ENCODE measurements at regions of chr13 and their contacts with region 1.

Region 1: DNA sequence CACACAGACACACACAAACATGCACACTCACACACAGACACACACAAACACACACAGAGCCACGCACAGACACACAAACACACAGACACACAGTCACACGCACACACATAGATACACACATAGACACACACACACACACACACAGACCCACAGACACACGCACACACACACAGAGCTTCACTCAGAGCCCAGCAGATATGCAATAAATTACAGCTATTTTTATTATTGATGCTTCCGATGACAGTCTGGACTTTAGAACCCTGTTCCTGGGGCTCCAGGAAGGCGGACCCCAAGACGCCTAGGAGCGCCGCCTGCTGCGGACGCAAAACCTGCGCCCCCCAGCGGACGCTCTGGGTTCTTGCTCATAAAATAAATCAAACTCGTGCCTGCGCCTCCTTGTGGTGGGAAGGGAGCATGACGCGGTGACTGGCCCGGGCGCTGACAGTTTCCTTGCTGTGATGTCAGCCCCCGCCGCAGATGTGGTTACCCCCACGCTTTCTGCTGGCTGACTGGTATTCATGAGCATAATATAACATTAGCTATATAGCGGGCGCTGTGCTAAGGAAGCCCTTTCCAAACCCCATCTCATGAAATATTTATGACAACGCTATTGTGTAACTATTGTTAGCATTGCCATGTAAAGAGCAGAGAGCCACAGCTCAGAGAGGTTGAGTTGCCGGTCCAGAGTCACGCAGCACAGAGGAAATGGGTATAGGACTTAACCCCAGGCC is 64.4 kb upstream of the TM9SF2 start:
- DNase-seq: peak; percentile 79
- CTCF ChIP-seq: peak; percentile 99

Region 2: DNA sequence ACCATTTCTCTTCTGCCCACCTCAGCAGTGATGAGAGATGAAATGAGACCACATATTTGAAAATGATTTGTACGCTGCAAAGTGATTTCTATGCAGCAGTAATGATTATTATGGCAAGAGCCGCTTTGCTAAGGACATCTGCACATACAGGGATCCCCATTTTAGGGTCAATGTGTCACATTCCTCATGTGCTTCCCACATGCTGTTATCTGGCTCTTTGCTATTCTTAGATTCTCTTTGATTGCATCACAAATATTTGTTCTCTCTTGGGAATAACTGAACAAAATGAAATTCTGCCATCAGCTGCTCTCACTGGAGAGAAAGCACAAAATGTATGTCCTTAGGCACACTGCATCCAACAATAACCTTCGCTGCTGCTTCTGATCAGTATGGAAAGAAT is 1692.9 kb before region 1 on chr13:
- in situ Hi-C with region 1: no loop called
- DNase-seq: no peak
- CTCF ChIP-seq: no peak

Region 3: GRCh38 chr13:99176309-99177276 is 260.3 kb before region 1 on chr13:
- in situ Hi-C with region 1: loop called (anchors 10 kb)
- DNase-seq: peak; percentile 82
- CTCF ChIP-seq: peak; percentile 87

Region 4: GRCh38 chr13:99269627-99270241 is 167.1 kb before region 1 on chr13:
- in situ Hi-C with region 1: loop called (anchors 5 kb)
- DNase-seq: peak; percentile 26
- CTCF ChIP-seq: peak; percentile 87

Region 5: GRCh38 chr13:99386911-99387788 is 49.7 kb before region 1 on chr13:
- in situ Hi-C with region 1: loop called (anchors 5 kb)
- DNase-seq: peak; percentile 85
- CTCF ChIP-seq: peak; percentile 92

Measured in GM13977 (cell line).